Activated T-helper 2 cell treated with anti-CD3 and anti-CD28 coated beads, Interferon-gamma antibody, Interleukin-2, Interleukin-4, amounts not matched to agents 10 μg/mL and 5 μg/mL and 100 μg/mL, durations not matched to agents 14 hours and 24 hours and 36 hours (primary cell): ENCODE measurements at regions of chr2 and their contacts with region 1.

Region 1: DNA sequence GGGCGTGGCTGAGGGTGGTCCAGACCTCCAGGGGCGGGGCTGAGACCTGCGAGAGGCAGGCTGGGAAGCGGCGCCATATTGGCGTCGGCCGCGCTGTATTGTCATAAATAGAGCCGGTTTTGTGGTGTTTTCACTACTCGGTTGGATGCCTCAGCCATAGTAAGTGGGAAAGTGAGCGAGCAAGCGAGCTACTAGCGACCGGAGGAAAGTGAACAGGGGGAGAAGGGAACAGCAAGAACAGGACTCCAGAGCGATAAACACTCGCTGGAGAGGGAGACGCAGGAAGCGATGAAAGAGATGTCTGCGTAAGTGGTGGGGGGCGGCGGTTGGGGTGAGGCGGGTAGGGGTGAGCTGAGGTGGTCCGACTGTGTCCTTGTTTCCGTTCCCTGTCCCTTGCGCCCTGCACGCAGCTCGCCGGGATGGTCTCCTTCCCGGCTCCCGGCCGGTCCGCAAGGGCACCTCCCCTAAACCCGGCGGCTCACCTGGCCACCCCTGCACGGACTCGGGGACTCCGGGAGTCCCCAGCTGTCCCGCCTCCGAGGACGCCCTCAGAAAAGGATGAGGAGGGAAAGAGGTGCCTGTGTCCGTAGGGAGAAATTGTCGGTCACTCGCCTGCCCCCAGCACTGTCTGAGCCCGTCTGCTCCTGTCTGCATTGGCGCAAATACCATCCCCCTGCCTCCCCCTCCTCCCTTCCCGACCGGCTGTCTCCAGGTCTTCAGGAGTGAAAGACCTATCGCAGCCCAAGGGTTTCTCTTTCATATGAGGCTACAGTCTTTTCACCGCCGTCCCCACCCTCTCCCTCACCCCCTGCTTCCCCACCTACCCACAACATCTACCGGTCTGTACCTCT is at the start of gene PAPOLG:
- DNase-seq: peak; percentile 94
- H3K4me3 Mint-ChIP-seq: peak within 1 kb of the TSS; percentile 96
- H3K27ac Mint-ChIP-seq: peak within 1 kb of the TSS; percentile 96
- H3K4me1 Mint-ChIP-seq: peaks cover 29% of the 10 kb centered on the region
- H3K27me3 Mint-ChIP-seq: no peaks in the 10 kb centered on the region
- total RNA-seq, gene PAPOLG: 20.4 and 21.2 TPM in 2 replicates

Region 2: DNA sequence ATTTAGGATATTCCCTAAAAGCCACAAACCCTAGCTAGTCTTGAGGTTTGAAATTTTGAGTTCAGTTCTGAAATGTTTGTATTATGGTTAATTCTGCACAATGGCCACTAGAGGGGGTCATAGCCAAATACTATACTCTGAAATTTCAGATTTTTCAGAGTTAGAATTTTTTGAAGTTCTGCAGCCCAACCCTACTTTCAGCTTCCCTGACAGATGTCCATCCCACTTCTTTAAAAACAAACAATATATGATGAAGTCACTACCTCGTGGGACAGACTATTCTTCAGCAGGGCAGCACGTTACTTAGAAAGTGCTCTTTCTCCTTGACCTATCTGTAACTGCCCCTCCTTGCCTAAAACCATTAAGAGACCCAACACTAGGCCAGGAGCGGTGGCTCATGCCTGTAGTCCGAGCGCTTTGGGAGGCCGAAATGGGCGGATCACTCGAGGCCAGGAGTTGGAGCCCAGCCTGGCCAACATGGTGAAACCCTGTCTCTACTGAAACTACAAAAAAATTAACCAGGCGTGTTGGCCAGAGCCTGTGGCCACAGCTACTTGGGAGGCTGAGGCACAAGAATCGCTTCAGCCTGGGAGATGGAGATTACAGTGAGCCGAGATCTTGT is 48.6 kb before region 1 on chr2:
- intact Hi-C with region 1: loop called (anchors 1 kb)
- DNase-seq: no peak
- H3K4me3 Mint-ChIP-seq: no peak overlapping the region
- H3K27ac Mint-ChIP-seq: no peak overlapping the region
- H3K4me1 Mint-ChIP-seq: peaks cover 2% of the 10 kb centered on the region
- H3K27me3 Mint-ChIP-seq: peaks cover 7% of the 10 kb centered on the region

Region 3: DNA sequence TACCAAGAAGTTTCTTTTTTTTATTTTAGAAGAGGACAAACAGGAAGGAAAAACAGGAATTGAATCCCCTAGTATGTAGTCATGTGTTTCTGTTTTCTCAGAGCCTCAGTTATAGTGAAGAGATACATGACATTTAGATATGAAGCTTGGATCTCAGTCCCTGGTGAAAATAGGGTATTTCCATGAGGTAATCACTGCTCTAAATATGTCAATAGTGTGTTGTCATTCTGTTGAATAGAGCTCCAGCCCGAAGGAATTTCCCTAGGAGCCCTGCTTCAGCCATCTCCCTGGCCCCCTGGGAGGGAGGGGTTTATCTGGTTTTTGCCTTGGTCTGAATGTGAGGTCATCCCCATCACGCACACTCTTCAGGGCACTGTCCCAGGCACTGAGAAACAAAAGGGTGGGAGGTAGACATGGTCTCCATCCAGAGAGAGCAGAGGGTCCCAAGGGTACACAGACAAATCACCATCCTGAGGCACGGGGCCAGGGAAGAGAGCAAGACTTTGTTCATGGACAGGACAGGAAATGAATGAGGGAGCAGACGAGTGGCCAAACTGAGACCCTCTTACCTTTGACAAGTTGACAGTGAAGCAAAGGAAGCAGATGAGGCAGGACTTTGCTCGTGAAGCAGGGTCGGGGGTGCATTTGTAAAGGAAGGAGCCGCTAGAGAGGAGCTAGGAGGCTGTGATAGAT is 78.0 kb after region 1 on chr2:
- intact Hi-C with region 1: no loop called
- DNase-seq: no peak
- H3K4me3 Mint-ChIP-seq: no peak overlapping the region
- H3K27ac Mint-ChIP-seq: peak overlapping the region; percentile 47
- H3K4me1 Mint-ChIP-seq: peaks cover 19% of the 10 kb centered on the region
- H3K27me3 Mint-ChIP-seq: no peaks in the 10 kb centered on the region

Region 4: GRCh38 chr2:61210331-61210981 is 454.0 kb after region 1 on chr2:
- intact Hi-C with region 1: no loop called
- DNase-seq: no peak
- H3K4me3 Mint-ChIP-seq: no peak overlapping the region
- H3K27ac Mint-ChIP-seq: no peak overlapping the region
- H3K4me1 Mint-ChIP-seq: peaks cover 3% of the 10 kb centered on the region
- H3K27me3 Mint-ChIP-seq: no peaks in the 10 kb centered on the region